ENCODE measurements at regions of chr4 and their contacts with region 1.

Region 1: GRCh38 chr4:128553686-128554515 is 255.6 kb upstream of the JADE1 start:
- DNase-seq: no peak

Region 2: GRCh38 chr4:128454281-128455075 is 99.4 kb before region 1 on chr4:
- intact Hi-C with region 1: loop called (anchors 5 kb)
- DNase-seq: peak; percentile 82

Region 3: DNA sequence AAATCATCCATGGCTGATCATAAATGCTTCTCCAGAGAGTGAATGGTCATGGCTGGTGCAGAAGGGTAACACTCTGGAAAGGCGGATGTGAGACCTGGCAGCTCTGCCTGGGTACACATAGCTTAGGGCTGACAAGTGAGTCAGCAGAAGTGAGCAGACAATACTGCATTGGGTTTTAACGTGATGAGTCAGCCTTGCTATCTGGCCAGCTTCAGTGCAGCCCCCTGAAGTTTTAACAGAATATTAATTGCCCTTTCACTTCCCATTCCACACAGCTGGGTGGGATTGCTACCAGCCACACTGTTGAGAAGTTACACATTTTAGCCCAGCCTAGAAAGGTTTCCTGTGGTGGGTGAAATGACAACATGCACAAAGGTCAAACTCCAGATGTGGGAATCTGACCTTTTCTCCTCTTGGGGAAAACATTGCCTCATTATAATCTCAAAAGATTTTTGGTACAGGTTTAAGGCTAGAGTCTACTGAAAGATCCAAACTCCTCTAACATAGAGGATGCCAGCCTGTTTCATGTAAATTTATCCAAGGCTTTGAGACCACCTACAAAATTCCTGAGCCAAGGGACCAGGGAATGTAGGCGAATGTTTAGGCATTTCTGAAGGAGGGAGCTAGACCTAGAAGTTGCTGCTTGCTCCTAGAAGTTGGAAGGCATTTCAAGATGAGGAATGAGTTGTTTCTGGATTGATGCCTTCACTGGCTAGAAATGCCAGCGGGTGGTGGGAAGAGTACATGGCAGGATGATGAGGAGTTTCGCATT is 36.0 kb before region 1 on chr4:
- intact Hi-C with region 1: loop called (anchors 5 kb)
- DNase-seq: no peak

Region 4: GRCh38 chr4:128574706-128575105 is 20.8 kb after region 1 on chr4:
- intact Hi-C with region 1: loop called (anchors 2 kb)
- DNase-seq: no peak

Region 5: DNA sequence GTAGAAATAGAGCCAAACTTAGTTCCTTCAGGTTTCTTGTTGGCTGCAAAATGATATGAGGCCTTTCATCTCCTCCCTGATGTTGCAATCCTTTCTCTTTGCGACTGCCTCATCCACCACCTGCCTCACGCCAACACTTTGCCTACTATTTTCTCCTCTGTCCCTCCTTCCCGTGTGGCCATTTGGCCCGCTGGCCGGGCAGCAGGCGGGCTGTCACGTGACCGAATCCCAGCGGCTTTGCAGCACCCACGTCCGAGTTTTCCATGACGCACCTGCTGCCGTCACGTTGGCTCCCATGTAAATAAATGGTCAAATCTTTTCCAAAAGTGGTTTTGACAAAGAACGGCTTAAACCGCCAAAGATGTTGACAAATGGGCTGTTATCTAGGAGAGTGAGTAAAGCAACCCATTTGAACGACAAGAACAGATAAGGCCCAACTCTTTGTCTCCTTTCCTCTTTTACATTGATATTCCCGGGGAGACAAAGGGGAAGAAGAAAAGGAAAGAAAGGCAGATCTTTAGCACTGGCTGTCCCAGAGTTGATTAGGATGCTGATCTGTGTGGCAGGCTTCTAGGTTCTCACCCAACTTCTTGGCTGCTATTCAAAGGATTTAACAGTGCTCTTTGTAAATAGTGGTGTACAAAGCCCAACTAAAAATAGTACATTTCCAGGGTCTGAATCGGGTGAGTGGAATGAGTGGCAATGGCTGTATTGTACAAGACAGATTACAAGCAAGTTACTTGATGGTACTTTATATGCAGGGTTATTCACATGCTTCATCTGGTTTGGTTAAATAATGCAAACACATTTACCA is 81.4 kb after region 1 on chr4:
- intact Hi-C with region 1: loop called (anchors 1 kb)
- DNase-seq: peak; percentile 88